Transverse colon (tissue), 4 donors: ENCODE measurements at regions of chr7 and their contacts with region 1.

Region 1: GRCh38 chr7:146961617-146962016 is 845.0 kb downstream of the CNTNAP2 start:
- DNase-seq: no peak
- H3K4me3 ChIP-seq: no peak overlapping the region
- H3K27ac ChIP-seq: no peak overlapping the region
- H3K4me1 ChIP-seq: no peaks in the 10 kb centered on the region
- H3K27me3 ChIP-seq: no peaks in the 10 kb centered on the region
- CTCF ChIP-seq: no peak
- EP300 ChIP-seq: no peak
- POLR2A ChIP-seq: no peak

Region 2: DNA sequence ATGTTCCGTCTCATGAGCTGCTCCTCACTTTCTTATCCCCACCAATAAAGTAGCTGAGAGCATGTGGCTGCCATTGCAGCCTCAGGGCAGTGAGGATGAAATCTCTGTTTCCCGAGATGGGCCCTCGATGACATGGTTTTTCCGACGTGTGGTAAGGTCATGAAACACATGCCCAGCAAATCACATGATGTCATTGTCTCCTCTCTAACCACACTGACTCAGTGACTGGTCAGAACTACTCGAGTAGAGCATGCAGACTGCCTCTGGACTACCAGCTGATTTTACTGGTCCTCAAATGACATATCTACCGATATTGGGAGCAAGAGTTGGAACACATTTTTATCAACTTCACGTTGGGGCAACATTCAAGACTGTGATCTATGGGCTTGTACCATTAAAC is 58.9 kb before region 1 on chr7:
- in situ Hi-C with region 1: no loop called
- intact Hi-C with region 1: no loop called
- DNase-seq: no peak
- H3K4me3 ChIP-seq: no peak overlapping the region
- H3K27ac ChIP-seq: no peak overlapping the region
- H3K4me1 ChIP-seq: no peaks in the 10 kb centered on the region
- H3K27me3 ChIP-seq: no peaks in the 10 kb centered on the region
- CTCF ChIP-seq: no peak
- EP300 ChIP-seq: no peak
- POLR2A ChIP-seq: no peak

Region 3: DNA sequence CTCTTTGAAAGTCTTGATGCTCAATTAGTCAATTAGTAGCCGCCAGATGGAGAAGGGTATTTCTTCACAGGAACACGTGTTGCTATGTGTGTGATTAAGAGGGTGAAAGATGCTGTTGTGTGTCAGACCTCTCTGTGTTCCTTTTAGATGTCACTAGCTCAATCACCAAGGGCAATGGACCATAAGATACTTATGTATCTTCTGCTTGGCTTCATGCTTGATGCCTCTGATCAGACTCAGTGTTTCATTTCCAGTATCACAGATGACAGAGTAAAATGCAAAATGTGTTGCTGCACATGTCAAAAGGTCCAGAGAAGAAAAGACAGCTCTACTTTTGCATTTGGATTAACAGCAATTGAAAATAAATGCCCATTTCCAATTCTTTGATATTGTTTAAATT is 20.9 kb after region 1 on chr7:
- in situ Hi-C with region 1: no loop called
- intact Hi-C with region 1: loop called (anchors 1 kb)
- DNase-seq: no peak
- H3K4me3 ChIP-seq: no peak overlapping the region
- H3K27ac ChIP-seq: no peak overlapping the region
- H3K4me1 ChIP-seq: no peaks in the 10 kb centered on the region
- H3K27me3 ChIP-seq: no peaks in the 10 kb centered on the region
- CTCF ChIP-seq: no peak
- EP300 ChIP-seq: no peak
- POLR2A ChIP-seq: no peak